ENCODE measurements at regions of chr15 and their contacts with region 1.

Region 1: DNA sequence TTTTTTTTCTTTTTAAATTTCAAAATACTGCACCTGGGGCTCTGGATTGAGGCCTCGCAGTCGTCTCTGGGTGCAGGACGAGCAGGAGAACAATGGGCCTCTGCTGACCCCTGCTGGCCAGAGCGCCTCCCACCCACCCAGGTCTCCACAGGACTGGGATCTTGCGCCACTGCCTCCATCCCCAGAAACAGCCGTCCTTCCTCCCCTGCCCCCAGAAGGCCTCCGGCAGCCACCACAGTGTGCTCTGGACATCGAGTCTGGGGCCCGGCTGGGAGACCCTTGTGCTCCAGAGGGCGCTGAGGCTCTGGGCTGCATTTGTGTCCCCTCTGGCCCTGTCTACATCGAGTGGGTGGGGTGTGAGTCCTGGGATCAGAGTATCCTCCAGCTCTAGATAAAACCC is 6.6 kb upstream of the ACSBG1 start:
- DNase-seq: peak; percentile 65
- H3K4me3 ChIP-seq: no peak overlapping the region
- H3K27ac ChIP-seq: no peak overlapping the region
- H3K4me1 ChIP-seq: no peaks in the 10 kb centered on the region
- H3K27me3 ChIP-seq: peaks cover 0 to 4% of the 10 kb centered on the region in 2 experiments
- CTCF ChIP-seq: peak; percentile 78 to 92
- POLR2A ChIP-seq: no peak

Region 2: DNA sequence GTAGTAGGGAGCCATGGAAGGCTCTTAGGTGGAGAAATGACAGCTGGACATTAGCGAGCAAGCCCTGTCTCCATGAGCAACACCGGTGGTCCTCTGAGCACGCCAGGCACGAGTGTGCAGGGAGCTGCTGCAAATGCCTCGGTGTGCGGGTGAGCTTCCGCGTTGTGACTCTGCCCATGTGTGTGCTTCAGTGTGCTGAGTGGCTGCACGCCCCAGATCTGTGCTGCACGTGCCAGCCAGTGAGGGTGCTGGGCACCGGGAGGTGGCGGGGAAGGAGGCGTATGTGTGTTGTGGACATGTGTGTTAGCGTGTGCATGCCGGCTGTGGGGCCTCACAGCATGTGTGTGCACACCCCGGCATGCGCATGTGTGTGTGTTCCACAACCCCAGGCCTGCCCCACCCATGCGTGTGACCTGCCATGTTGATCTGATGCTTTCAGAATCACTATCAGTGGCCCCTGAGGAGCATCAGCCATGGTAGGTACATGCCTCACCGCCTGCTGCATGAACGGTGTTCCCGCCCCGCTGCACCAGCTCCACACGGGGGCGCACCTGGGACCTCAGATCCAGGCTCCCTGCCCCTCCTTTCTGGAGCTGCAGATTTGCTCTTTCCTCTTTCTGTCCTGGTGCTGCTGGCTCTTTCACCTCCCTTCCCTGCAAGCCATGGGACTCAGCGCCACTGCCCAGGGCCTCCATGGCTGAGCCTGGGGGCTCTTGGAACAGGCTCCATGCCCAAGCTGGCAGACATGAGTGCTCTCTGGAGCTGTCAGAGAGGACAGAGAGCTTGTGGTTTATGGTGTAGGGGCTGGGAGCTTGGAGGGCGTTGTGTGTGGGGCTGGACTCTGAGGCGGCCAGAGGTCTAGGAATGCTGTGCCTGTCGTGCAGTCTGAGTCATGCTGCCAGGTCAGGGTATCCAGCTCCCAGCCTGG is 332.9 kb before region 1 on chr15:
- CTCF ChIA-PET with region 1: interaction called, 18 read pairs
- POLR2A ChIA-PET with region 1: no interaction called
- dilution Hi-C with region 1: no loop called
- intact Hi-C with region 1: loop called (anchors 1 kb)
- DNase-seq: no peak
- H3K4me3 ChIP-seq: no peak overlapping the region
- H3K27ac ChIP-seq: no peak overlapping the region
- H3K4me1 ChIP-seq: no peaks in the 10 kb centered on the region
- H3K27me3 ChIP-seq: peaks cover 0 to 3% of the 10 kb centered on the region in 2 experiments
- CTCF ChIP-seq: peak; percentile 54 to 61
- POLR2A ChIP-seq: no peak

Region 3: GRCh38 chr15:78000091-78000926 is 240.7 kb before region 1 on chr15:
- CTCF ChIA-PET with region 1: interaction called, 5 read pairs
- POLR2A ChIA-PET with region 1: no interaction called
- dilution Hi-C with region 1: no loop called
- intact Hi-C with region 1: loop called (anchors 2 kb)
- DNase-seq: peak; percentile 79
- H3K4me3 ChIP-seq: no peak overlapping the region
- H3K27ac ChIP-seq: no peak overlapping the region
- H3K4me1 ChIP-seq: no peaks in the 10 kb centered on the region
- H3K27me3 ChIP-seq: no peaks in the 10 kb centered on the region
- CTCF ChIP-seq: peak; percentile 83 to 88
- POLR2A ChIP-seq: no peak

Region 4: DNA sequence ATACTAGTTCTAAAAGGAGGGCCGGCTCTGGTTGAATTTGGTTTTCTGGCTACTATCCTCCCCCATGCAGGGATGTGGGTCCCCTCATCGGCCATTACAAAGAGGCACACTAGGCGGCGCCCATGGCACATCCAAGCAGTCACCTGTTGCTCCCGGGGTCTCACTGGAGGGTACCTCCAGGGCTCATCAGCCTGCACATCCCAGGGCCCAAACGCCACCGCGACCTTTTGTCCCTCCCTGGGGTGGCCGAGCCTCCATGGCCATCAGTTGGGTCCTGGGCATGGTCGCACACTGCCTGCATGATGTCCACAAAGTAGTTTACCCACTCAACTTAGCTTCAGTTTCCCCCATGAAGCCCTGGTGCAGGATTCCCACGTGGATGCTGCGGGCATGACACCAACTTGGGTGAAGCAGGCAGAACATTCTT is 63.5 kb before region 1 on chr15:
- CTCF ChIA-PET with region 1: interaction called, 57 read pairs
- POLR2A ChIA-PET with region 1: no interaction called
- dilution Hi-C with region 1: no loop called
- intact Hi-C with region 1: loop called (anchors 1 kb)
- DNase-seq: peak; percentile 26
- H3K4me3 ChIP-seq: no peak overlapping the region
- H3K27ac ChIP-seq: no peak overlapping the region
- H3K4me1 ChIP-seq: no peaks in the 10 kb centered on the region
- H3K27me3 ChIP-seq: no peaks in the 10 kb centered on the region
- CTCF ChIP-seq: peak; percentile 53 to 70
- POLR2A ChIP-seq: no peak

Region 5: GRCh38 chr15:78225783-78226541 is 15.0 kb before region 1 on chr15:
- CTCF ChIA-PET with region 1: interaction called, 17 read pairs
- POLR2A ChIA-PET with region 1: no interaction called
- dilution Hi-C with region 1: no loop called
- intact Hi-C with region 1: no loop called
- DNase-seq: no peak
- H3K4me3 ChIP-seq: no peak overlapping the region
- H3K27ac ChIP-seq: no peak overlapping the region
- H3K4me1 ChIP-seq: no peaks in the 10 kb centered on the region
- H3K27me3 ChIP-seq: peaks cover 2 to 5% of the 10 kb centered on the region in 2 experiments
- CTCF ChIP-seq: no peak
- POLR2A ChIP-seq: no peak

Region 6: GRCh38 chr15:78284758-78285157 is 43.8 kb after region 1 on chr15:
- CTCF ChIA-PET with region 1: no interaction called
- POLR2A ChIA-PET with region 1: no interaction called
- dilution Hi-C with region 1: no loop called
- intact Hi-C with region 1: no loop called
- DNase-seq: no peak
- H3K4me3 ChIP-seq: no peak overlapping the region
- H3K27ac ChIP-seq: no peak overlapping the region
- H3K4me1 ChIP-seq: no peaks in the 10 kb centered on the region
- H3K27me3 ChIP-seq: no peaks in the 10 kb centered on the region
- CTCF ChIP-seq: no peak
- POLR2A ChIP-seq: no peak

Region 7: DNA sequence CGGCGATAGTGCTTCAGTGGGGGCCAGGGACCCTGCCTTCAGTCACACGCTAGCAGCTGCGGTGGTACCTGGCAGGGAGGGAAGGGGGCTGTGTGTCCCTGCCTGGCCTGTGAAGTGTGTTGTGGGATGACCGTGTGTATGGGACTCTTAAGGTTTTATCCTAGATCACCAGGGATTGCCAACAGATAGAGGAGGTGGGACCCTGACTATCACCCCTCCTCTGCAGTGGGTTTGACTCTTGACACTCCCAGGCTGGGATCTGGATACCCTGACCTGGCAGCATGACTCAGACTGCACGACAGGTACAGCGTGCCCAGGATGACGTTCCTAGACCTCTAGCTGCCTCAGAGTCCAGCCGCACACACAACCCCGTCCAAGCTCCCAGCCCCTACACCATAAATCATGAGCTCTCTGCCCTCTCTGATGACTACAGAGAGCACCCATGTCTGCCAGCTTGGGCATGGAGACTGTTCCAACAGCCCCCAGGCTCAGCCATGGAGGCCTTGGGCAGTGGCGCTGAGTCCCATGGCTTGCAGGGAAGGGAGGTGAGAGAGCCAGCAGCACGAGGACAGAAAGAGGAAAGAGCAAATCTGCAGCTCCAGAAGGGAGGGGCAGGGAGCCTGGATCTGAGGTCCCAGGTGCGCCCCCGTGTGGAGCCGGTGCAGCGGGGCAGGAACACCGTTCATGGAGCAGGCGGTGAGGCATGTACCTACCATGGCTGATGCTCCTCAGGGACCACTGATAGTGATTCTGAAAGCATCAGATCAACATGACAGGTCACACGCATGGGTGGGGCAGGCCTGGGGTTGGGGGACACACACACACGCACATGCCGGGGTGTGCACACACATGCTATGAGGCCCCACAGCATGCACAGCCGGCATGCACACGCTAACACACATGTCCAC is 499.2 kb after region 1 on chr15:
- CTCF ChIA-PET with region 1: no interaction called
- POLR2A ChIA-PET with region 1: no interaction called
- dilution Hi-C with region 1: no loop called
- intact Hi-C with region 1: no loop called
- DNase-seq: peak; percentile 26
- H3K4me3 ChIP-seq: no peak overlapping the region
- H3K27ac ChIP-seq: no peak overlapping the region
- H3K4me1 ChIP-seq: no peaks in the 10 kb centered on the region
- H3K27me3 ChIP-seq: peaks cover 0 to 2% of the 10 kb centered on the region in 2 experiments
- CTCF ChIP-seq: peak; percentile 46 to 77
- POLR2A ChIP-seq: no peak

Region 8: DNA sequence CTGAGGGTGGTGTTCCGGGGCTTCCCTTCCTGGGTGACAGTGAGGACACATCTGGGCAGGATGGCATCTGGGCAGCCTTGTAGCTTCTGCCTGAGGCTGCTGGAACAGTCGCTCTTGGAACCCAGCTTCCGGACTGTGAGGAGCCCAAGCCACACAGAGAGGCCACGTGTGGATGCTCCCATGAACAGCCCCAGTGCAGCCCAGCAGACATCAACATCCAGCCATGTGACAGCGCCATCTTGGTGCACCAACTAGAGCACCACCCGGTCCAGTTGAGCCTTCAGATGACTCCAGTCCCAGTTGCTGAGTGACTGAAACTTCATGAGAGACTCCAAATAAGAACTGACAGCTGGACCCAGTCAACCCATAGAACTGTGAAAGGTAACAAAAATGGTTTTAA is 719.3 kb after region 1 on chr15:
- CTCF ChIA-PET with region 1: no interaction called
- POLR2A ChIA-PET with region 1: no interaction called
- dilution Hi-C with region 1: no loop called
- intact Hi-C with region 1: no loop called
- DNase-seq: no peak
- H3K4me3 ChIP-seq: no peak overlapping the region
- H3K27ac ChIP-seq: no peak overlapping the region
- H3K4me1 ChIP-seq: no peaks in the 10 kb centered on the region
- H3K27me3 ChIP-seq: peaks cover 0 to 3% of the 10 kb centered on the region in 2 experiments
- CTCF ChIP-seq: no peak
- POLR2A ChIP-seq: no peak